Thyroid gland (tissue), 4 donors: ENCODE measurements at regions of chr2 and their contacts with region 1.

Region 1: GRCh38 chr2:231713730-231714430 is 5.6 kb downstream of the PTMA start:
- DNase-seq: peak; percentile 92 to 93
- H3K4me3 ChIP-seq: no peak overlapping the region
- H3K27ac ChIP-seq: peak overlapping the region; percentile 37 to 83 (median 64)
- H3K4me1 ChIP-seq: peaks cover 24 to 31% of the 10 kb centered on the region in 2 donors
- H3K27me3 ChIP-seq: no peaks in the 10 kb centered on the region
- CTCF ChIP-seq: peak; percentile 66 to 95 (median 92)
- POLR2A ChIP-seq: peak in 1 of 2 donors; percentile 12

Region 2: GRCh38 chr2:231674587-231675338 is 39.1 kb before region 1 on chr2:
- intact Hi-C with region 1: loop called (anchors 1 kb)
- DNase-seq: peak; percentile 76 to 79
- H3K4me3 ChIP-seq: no peak overlapping the region
- H3K27ac ChIP-seq: peak overlapping the region; percentile 81 to 94 (median 94)
- H3K4me1 ChIP-seq: peaks cover 32 to 53% of the 10 kb centered on the region in 2 donors
- H3K27me3 ChIP-seq: no peaks in the 10 kb centered on the region
- CTCF ChIP-seq: peak; percentile 60 to 91 (median 84)
- POLR2A ChIP-seq: no peak

Region 3: DNA sequence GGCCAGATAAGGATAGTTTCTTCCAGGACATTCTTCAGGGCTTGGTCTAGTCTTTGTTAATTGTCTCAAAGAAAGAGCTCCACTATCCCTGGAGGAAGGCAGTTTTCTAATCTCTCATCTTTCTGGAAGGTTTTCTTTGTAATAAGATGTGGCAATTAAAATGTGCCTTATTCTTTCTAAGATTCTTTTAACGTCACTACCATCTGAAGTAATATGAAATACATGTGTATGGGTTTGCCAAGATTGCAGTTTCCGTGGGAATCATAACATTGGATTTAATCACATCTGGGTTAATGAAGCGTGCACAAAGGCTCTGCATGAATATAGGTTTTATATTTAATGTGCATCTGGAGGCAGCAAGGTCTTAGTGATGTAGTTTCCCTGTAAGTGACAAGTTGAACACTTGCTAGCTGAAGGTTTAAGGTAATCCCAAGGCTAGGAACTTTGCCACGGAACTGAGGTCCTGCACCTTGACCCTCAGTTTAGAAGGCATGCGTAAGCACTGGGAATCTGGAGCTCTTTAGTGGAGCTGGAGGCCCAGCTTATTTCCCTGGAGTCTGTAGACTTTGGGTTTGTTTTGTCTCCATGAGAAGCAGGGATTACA is 273.3 kb after region 1 on chr2:
- intact Hi-C with region 1: no loop called
- DNase-seq: no peak
- H3K4me3 ChIP-seq: no peak overlapping the region
- H3K27ac ChIP-seq: no peak overlapping the region
- H3K4me1 ChIP-seq: peaks cover 4 to 12% of the 10 kb centered on the region in 2 donors
- H3K27me3 ChIP-seq: no peaks in the 10 kb centered on the region
- CTCF ChIP-seq: no peak
- POLR2A ChIP-seq: no peak